Activated B cell treated with CpG ODN at 0.5 μM for 24 hours (primary cell): ENCODE measurements at regions of chr9 and their contacts with region 1.

Region 1: DNA sequence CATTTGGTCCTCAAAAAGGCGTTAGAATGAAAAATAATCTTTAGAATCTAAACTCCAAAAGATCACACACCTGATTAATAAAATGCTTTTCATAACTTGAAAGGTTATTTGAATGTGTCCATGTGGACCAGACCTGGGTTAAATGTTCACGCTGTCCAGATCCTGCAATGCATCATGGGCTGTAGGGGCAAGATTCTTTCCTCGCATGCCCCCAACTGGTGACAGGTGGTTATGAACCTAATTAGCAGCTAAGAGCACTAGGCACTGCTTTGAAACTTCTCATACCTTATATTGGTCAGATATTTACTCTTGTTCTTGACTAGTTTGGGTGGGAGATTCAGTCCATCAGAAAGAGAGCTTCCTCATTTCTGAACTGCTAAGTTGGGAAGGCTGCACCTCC is 19.3 kb upstream of the PIP5K1B start:
- DNase-seq: peak; percentile 27
- ATAC-seq: peak; percentile 97
- H3K4me3 Mint-ChIP-seq: no peak overlapping the region
- H3K27ac Mint-ChIP-seq: no peak overlapping the region
- H3K4me1 Mint-ChIP-seq: peaks cover 9% of the 10 kb centered on the region
- H3K27me3 Mint-ChIP-seq: no peaks in the 10 kb centered on the region
- CTCF ChIP-seq: no peak

Region 2: DNA sequence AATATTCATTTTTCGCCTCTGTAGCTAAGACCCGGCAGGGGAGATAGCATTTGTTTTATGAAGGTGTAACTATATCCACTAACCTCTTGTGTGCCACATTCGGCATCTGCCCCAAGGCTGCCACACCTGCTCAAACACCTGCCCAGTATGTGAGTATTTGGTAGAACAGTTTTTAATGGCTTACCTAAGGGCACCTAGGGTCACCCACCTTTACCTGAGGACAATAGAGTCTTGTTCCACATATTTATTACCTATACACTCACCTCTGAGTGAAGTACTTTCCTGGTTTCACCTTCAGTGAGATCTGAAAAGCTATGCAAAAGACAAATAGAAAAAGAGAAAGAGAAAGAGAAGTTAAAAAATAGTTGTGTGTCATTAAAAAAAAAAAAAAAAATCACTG is 48.8 kb before region 1 on chr9:
- CTCF ChIA-PET with region 1: interaction called, 10 read pairs
- POLR2A ChIA-PET with region 1: interaction called, 3 read pairs
- intact Hi-C with region 1: no loop called
- DNase-seq: no peak
- ATAC-seq: no peak
- H3K4me3 Mint-ChIP-seq: peak overlapping the region; percentile 48
- H3K27ac Mint-ChIP-seq: peak overlapping the region; percentile 71
- H3K4me1 Mint-ChIP-seq: peaks cover 76% of the 10 kb centered on the region
- H3K27me3 Mint-ChIP-seq: no peaks in the 10 kb centered on the region
- CTCF ChIP-seq: no peak

Region 3: GRCh38 chr9:68643901-68644809 is 41.6 kb before region 1 on chr9:
- CTCF ChIA-PET with region 1: interaction called, 9 read pairs
- POLR2A ChIA-PET with region 1: interaction called, 3 read pairs
- intact Hi-C with region 1: loop called (anchors 2 kb)
- DNase-seq: peak; percentile 31
- ATAC-seq: peak; percentile 63
- H3K4me3 Mint-ChIP-seq: peak overlapping the region; percentile 73
- H3K27ac Mint-ChIP-seq: peak overlapping the region; percentile 94
- H3K4me1 Mint-ChIP-seq: peaks cover 93% of the 10 kb centered on the region
- H3K27me3 Mint-ChIP-seq: no peaks in the 10 kb centered on the region
- CTCF ChIP-seq: no peak

Region 4: DNA sequence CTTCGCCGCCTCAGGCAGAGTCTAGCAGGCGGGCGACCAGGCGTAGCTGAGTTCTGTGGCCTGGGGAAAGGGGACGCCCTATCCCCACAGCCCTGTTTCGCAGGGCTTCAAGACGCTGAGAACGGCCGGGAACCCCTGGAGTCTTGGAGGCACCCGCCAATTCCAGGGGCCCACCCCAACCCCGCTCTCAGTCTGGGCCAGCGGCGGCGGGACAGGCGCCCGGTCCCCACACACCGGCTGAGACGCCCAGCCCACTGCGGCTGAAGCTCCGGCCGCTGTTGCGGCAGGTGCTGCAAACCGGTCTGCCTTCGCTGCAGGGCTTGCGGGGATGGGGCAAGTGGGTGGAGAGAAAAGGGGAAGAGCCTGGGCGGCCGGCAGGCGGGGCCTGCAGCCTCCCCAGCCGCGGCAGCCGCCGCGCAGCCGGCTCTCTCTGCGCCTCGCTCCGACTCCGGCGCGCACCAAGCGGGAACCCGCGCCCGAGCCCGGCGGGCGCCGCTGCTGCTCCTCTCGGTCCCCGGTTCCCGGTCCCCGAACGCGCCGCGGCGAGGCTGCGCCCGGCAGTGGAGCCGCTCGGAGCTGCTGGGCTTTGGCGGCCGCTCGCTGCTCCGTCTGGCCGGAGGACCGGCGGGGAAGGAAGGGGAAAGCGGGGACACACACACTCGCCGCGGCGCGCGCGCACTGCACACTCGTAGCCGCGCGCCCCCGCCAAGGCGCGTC is 19.2 kb after region 1 on chr9 and contains the start of gene PIP5K1B:
- CTCF ChIA-PET with region 1: interaction called, 8 read pairs
- POLR2A ChIA-PET with region 1: interaction called, 6 read pairs
- intact Hi-C with region 1: loop called (anchors 2 kb)
- DNase-seq: peak; percentile 76
- ATAC-seq: peak; percentile 85
- H3K4me3 Mint-ChIP-seq: peak within 1 kb of the TSS; percentile 97
- H3K27ac Mint-ChIP-seq: peak within 1 kb of the TSS; percentile 82
- H3K4me1 Mint-ChIP-seq: peaks cover 50% of the 10 kb centered on the region
- H3K27me3 Mint-ChIP-seq: no peaks in the 10 kb centered on the region
- CTCF ChIP-seq: no peak
- total RNA-seq, gene PIP5K1B: 17.1 and 22.0 TPM in 2 replicates

Region 5: DNA sequence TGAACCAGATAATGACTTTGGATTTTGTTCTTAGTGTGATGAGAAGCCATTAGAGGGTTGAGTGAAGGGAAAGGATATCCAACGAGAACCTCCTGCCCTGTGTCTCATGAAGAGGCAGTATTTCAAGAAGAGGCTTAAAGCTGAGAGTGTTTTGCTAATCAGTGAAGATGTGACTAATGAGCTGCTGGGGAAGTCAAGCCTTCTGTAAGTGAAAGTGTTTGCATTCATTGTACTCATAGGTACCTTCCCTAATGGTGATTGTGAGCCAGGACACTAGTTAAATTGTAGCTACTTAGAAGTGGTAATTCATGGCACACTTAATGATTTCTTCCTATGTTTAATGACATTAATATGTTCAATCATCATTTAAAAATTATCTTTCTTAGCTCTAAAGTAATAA is 43.0 kb after region 1 on chr9:
- CTCF ChIA-PET with region 1: no interaction called
- POLR2A ChIA-PET with region 1: interaction called, 11 read pairs
- intact Hi-C with region 1: no loop called
- DNase-seq: no peak
- ATAC-seq: no peak
- H3K4me3 Mint-ChIP-seq: no peak overlapping the region
- H3K27ac Mint-ChIP-seq: no peak overlapping the region
- H3K4me1 Mint-ChIP-seq: peaks cover 24% of the 10 kb centered on the region
- H3K27me3 Mint-ChIP-seq: no peaks in the 10 kb centered on the region
- CTCF ChIP-seq: no peak

Region 6: GRCh38 chr9:68999393-69000105 is 313.8 kb after region 1 on chr9:
- CTCF ChIA-PET with region 1: interaction called, 14 read pairs
- POLR2A ChIA-PET with region 1: no interaction called
- intact Hi-C with region 1: loop called (anchors 1 kb)
- DNase-seq: peak; percentile 24
- ATAC-seq: peak; percentile 95
- H3K4me3 Mint-ChIP-seq: no peak overlapping the region
- H3K27ac Mint-ChIP-seq: no peak overlapping the region
- H3K4me1 Mint-ChIP-seq: peaks cover 20% of the 10 kb centered on the region
- H3K27me3 Mint-ChIP-seq: no peaks in the 10 kb centered on the region
- CTCF ChIP-seq: peak; percentile 26

Region 7: GRCh38 chr9:69295872-69296552 is 610.2 kb after region 1 on chr9:
- CTCF ChIA-PET with region 1: no interaction called
- POLR2A ChIA-PET with region 1: no interaction called
- intact Hi-C with region 1: no loop called
- DNase-seq: no peak
- ATAC-seq: no peak
- H3K4me3 Mint-ChIP-seq: no peak overlapping the region
- H3K27ac Mint-ChIP-seq: no peak overlapping the region
- H3K4me1 Mint-ChIP-seq: no peaks in the 10 kb centered on the region
- H3K27me3 Mint-ChIP-seq: peaks cover 7% of the 10 kb centered on the region
- CTCF ChIP-seq: no peak